ENCODE measurements at regions of chr11 and their contacts with region 1.

Region 1: DNA sequence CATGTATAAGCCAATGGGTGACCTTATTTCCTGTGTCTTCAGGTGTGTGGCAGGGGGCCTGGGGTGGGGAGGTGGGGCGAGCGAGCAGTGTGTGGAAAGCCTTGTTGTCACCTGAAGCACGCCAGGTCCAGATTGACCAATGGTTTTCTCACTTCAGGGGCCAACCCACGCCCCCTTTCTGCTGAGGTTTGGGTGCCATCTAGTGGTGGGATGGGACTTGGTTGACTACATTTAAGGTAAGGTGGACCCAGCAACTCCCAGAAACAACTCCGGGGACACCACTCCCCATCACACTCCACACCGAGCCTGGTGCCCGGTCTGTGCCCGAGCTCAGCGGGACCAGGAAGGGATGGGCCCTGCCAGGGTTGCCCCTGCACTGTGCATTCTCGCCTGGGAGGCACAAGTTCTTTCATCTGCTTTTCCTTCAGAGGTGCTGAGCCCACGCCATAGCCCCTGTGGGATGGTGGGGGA is 40.0 kb downstream of the TPCN2 start:
- DNase-seq: peak; percentile 54
- ATAC-seq: peak; percentile 84
- H3K4me3 Mint-ChIP-seq: no peak overlapping the region
- H3K27ac Mint-ChIP-seq: no peak overlapping the region
- H3K4me1 Mint-ChIP-seq: no peaks in the 10 kb centered on the region
- H3K27me3 Mint-ChIP-seq: no peaks in the 10 kb centered on the region
- CTCF ChIP-seq: no peak

Region 2: DNA sequence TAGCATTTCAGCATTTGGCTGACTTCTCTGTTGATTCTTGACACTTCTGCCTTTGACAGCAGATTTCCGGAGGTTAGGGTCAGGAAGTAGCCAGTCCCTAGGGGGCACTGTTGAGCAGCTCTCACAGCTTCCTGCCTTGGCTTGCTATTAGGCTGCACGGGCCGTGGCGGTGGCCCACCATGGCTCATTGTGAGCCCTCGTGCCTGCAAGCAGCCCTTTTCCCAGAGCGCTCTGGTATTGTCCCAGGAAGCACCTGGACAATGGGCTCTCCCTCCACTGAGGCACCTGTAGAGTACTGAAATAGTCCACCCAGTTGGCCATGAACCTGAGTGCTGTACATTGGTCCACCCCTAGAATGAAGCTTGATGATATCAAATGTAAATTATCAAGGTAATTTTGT is 504.6 kb before region 1 on chr11:
- CTCF ChIA-PET with region 1: no interaction called
- POLR2A ChIA-PET with region 1: no interaction called
- intact Hi-C with region 1: loop called (anchors 5 kb)
- DNase-seq: peak; percentile 33
- ATAC-seq: peak; percentile 64
- H3K4me3 Mint-ChIP-seq: no peak overlapping the region
- H3K27ac Mint-ChIP-seq: no peak overlapping the region
- H3K4me1 Mint-ChIP-seq: peaks cover 16% of the 10 kb centered on the region
- H3K27me3 Mint-ChIP-seq: no peaks in the 10 kb centered on the region
- CTCF ChIP-seq: peak; percentile 27

Region 3: GRCh38 chr11:68825571-68825970 is 263.1 kb before region 1 on chr11:
- CTCF ChIA-PET with region 1: no interaction called
- POLR2A ChIA-PET with region 1: no interaction called
- intact Hi-C with region 1: loop called (anchors 1 kb)
- DNase-seq: peak; percentile 50
- ATAC-seq: peak; percentile 77
- H3K4me3 Mint-ChIP-seq: no peak overlapping the region
- H3K27ac Mint-ChIP-seq: no peak overlapping the region
- H3K4me1 Mint-ChIP-seq: peaks cover 45% of the 10 kb centered on the region
- H3K27me3 Mint-ChIP-seq: no peaks in the 10 kb centered on the region
- CTCF ChIP-seq: no peak

Region 4: GRCh38 chr11:68903288-68904247 is 185.1 kb before region 1 on chr11 and contains the starts of genes IGHMBP2 and MRPL21:
- CTCF ChIA-PET with region 1: no interaction called
- POLR2A ChIA-PET with region 1: no interaction called
- intact Hi-C with region 1: loop called (anchors 1 kb)
- DNase-seq: peak; percentile 87
- ATAC-seq: peak; percentile 96
- H3K4me3 Mint-ChIP-seq: peak within 1 kb of the TSS; percentile 97
- H3K27ac Mint-ChIP-seq: peak within 1 kb of the TSS; percentile 82
- H3K4me1 Mint-ChIP-seq: peaks cover 44% of the 10 kb centered on the region
- H3K27me3 Mint-ChIP-seq: no peaks in the 10 kb centered on the region
- CTCF ChIP-seq: no peak
- total RNA-seq, gene IGHMBP2: 24.2 and 33.8 TPM in 2 replicates
- total RNA-seq, gene MRPL21: 49.9 and 60.0 TPM in 2 replicates

Region 5: DNA sequence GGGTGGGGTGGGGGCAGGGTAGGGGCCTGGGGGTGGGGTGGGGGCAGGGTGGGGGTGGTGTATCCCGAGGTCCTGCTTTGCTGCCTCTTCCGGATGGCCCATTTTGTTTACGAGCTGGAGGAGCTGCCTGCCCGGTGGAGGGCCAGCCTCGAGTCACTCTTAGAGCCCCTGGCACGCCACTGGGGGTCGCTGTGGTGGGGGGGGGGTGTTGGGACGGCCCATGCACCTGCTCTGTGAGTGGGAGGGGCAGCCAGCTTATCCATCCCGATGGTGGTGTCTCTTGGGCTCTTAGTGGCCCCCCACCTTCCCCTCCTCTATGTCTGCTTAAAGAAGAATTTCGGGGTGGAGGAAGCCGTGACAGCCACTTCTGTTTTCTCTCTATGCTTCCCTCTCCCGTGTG is 132.6 kb before region 1 on chr11:
- CTCF ChIA-PET with region 1: interaction called, 3 read pairs
- POLR2A ChIA-PET with region 1: no interaction called
- intact Hi-C with region 1: loop called (anchors 1 kb)
- DNase-seq: no peak
- ATAC-seq: peak; percentile 40
- H3K4me3 Mint-ChIP-seq: no peak overlapping the region
- H3K27ac Mint-ChIP-seq: no peak overlapping the region
- H3K4me1 Mint-ChIP-seq: peaks cover 9% of the 10 kb centered on the region
- H3K27me3 Mint-ChIP-seq: peaks cover 6% of the 10 kb centered on the region
- CTCF ChIP-seq: no peak

Region 6: DNA sequence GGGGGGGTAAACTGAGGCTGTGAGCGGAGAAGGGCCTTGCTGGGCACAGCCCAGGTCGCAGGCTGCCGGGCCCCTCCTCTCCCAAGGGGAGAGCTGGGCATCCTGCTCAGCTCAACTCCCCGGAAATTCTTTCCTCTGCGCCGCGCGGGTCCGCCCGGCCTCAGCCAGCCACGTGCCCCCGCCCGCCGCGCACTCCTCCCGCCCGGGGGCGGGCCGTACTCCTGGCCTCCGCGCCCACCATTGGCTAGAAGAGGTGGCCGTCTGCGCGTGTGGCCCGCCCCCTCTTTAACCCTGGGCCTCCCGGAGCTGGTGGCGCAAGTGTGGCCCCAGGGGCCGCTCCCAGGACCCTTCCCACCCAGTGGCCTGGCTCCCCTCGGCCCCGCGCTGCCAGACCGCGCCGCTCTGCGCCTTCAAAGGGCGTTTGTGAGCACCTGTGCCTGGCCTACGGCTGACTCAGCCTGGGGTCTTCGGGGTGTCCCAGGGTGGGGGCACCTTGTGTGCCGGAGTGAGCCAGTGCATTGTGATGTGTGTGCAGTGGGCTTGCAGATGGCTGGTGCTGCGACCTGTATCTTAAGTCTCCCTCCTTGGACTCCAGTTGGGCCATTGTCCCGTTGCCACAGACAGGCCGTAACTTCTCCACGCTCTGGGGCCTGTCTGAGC is 77.6 kb before region 1 on chr11:
- CTCF ChIA-PET with region 1: no interaction called
- POLR2A ChIA-PET with region 1: no interaction called
- intact Hi-C with region 1: loop called (anchors 1 kb)
- DNase-seq: no peak
- ATAC-seq: peak; percentile 89
- H3K4me3 Mint-ChIP-seq: no peak overlapping the region
- H3K27ac Mint-ChIP-seq: no peak overlapping the region
- H3K4me1 Mint-ChIP-seq: peaks cover 5% of the 10 kb centered on the region
- H3K27me3 Mint-ChIP-seq: peaks cover 28% of the 10 kb centered on the region
- CTCF ChIP-seq: no peak

Region 7: DNA sequence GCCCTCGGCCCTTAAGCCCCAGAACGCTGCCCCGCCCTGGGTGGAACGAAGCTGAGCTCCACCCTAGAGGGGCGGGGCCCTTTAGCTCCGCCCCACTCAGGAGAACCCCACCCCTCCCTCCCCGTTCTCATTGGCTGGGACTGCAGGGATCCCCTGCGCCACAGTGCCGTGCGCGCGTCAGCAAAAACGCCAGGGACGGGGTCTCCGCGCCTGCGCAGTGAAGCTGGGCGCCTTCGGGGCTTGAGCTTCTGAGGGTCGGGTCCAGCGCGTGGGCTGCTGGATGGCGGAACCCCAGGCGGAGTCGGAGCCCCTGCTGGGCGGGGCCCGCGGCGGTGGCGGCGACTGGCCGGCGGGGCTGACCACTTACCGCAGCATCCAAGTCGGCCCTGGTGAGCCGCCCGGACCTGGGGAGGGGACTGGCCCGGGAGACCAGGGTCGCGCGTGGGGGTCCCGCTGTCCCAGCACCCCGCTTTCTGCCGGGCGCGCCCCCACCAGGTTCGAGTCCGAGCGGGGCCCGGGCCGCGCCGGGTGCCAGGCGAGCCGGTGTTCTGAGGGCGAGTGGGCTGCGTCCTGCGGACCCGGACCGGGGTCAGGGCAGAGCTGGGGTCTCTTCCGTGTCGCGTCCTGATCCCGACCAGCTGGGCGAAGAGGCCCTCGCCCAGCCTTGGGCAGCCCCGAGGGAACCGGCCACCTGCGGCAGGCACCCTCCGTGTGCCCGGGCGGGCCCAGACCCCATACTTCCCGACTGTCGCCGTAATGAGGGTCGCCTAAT is 39.8 kb before region 1 on chr11 and contains the start of gene TPCN2:
- CTCF ChIA-PET with region 1: no interaction called
- POLR2A ChIA-PET with region 1: interaction called, 6 read pairs
- intact Hi-C with region 1: loop called (anchors 5 kb)
- DNase-seq: peak; percentile 89
- ATAC-seq: peak; percentile 99
- H3K4me3 Mint-ChIP-seq: peak within 1 kb of the TSS; percentile 81
- H3K27ac Mint-ChIP-seq: peak within 1 kb of the TSS; percentile 70
- H3K4me1 Mint-ChIP-seq: peaks cover 47% of the 10 kb centered on the region
- H3K27me3 Mint-ChIP-seq: peaks cover 8% of the 10 kb centered on the region
- CTCF ChIP-seq: no peak
- total RNA-seq, gene TPCN2: 29.1 and 35.4 TPM in 2 replicates